Naive thymus-derived CD4-positive, alpha-beta T cell (primary cell): ENCODE measurements at regions of chr7 and their contacts with region 1.

Region 1: GRCh38 chr7:87886875-87887274 is 10.6 kb downstream of the DBF4 start:
- DNase-seq: peak in 6 of 9 donors; percentile 8 to 49 (median 43)
- ATAC-seq: peak; percentile 48
- H3K4me3 ChIP-seq: no peak overlapping the region
- H3K4me3 Mint-ChIP-seq: no peak overlapping the region
- H3K27ac ChIP-seq: no peak overlapping the region
- H3K27ac Mint-ChIP-seq: no peak overlapping the region
- H3K4me1 ChIP-seq: no peaks in the 10 kb centered on the region
- H3K4me1 Mint-ChIP-seq: peaks cover 5 to 28% (median 13%) of the 10 kb centered on the region in 7 donors
- H3K27me3 ChIP-seq: no peaks in the 10 kb centered on the region
- H3K27me3 Mint-ChIP-seq: no peaks in the 10 kb centered on the region

Region 2: GRCh38 chr7:87312215-87312865 is 574.5 kb before region 1 on chr7:
- CTCF ChIA-PET with region 1: interaction called, 3 read pairs
- POLR2A ChIA-PET with region 1: no interaction called
- intact Hi-C with region 1: loop called (anchors 1 to 2 kb)
- DNase-seq: peak; percentile 25 to 70 (median 55)
- ATAC-seq: peak; percentile 98
- H3K4me3 ChIP-seq: no peak overlapping the region
- H3K4me3 Mint-ChIP-seq: no peak overlapping the region
- H3K27ac ChIP-seq: no peak overlapping the region
- H3K27ac Mint-ChIP-seq: no peak overlapping the region
- H3K4me1 ChIP-seq: peaks cover 0 to 4% of the 10 kb centered on the region in 2 donors
- H3K4me1 Mint-ChIP-seq: peaks cover 0 to 3% (median 0%) of the 10 kb centered on the region in 7 donors
- H3K27me3 ChIP-seq: no peaks in the 10 kb centered on the region
- H3K27me3 Mint-ChIP-seq: peaks cover 0 to 12% (median 0%) of the 10 kb centered on the region in 5 donors

Region 3: GRCh38 chr7:87506246-87507180 is 380.4 kb before region 1 on chr7:
- CTCF ChIA-PET with region 1: interaction called, 8 read pairs
- POLR2A ChIA-PET with region 1: no interaction called
- intact Hi-C with region 1: loop called (anchors 1 kb)
- DNase-seq: peak in 3 of 9 donors; percentile 4 to 14 (median 12)
- ATAC-seq: no peak
- H3K4me3 ChIP-seq: no peak overlapping the region
- H3K4me3 Mint-ChIP-seq: no peak overlapping the region
- H3K27ac ChIP-seq: no peak overlapping the region
- H3K27ac Mint-ChIP-seq: no peak overlapping the region
- H3K4me1 ChIP-seq: no peaks in the 10 kb centered on the region
- H3K4me1 Mint-ChIP-seq: peaks cover 0 to 16% (median 0%) of the 10 kb centered on the region in 7 donors
- H3K27me3 ChIP-seq: no peaks in the 10 kb centered on the region
- H3K27me3 Mint-ChIP-seq: no peaks in the 10 kb centered on the region

Region 4: GRCh38 chr7:87853237-87853864 is 33.5 kb before region 1 on chr7:
- CTCF ChIA-PET with region 1: no interaction called
- POLR2A ChIA-PET with region 1: no interaction called
- intact Hi-C with region 1: loop called in 1 of 2 experiments (anchors 5 kb)
- DNase-seq: no peak
- ATAC-seq: no peak
- H3K4me3 ChIP-seq: no peak overlapping the region
- H3K4me3 Mint-ChIP-seq: no peak overlapping the region
- H3K27ac ChIP-seq: no peak overlapping the region
- H3K27ac Mint-ChIP-seq: no peak overlapping the region
- H3K4me1 ChIP-seq: no peaks in the 10 kb centered on the region
- H3K4me1 Mint-ChIP-seq: peaks cover 0 to 13% (median 3%) of the 10 kb centered on the region in 7 donors
- H3K27me3 ChIP-seq: no peaks in the 10 kb centered on the region
- H3K27me3 Mint-ChIP-seq: no peaks in the 10 kb centered on the region

Region 5: GRCh38 chr7:87933945-87934698 is 47.2 kb after region 1 on chr7 and contains the start of gene ADAM22:
- CTCF ChIA-PET with region 1: no interaction called
- POLR2A ChIA-PET with region 1: no interaction called
- intact Hi-C with region 1: no loop called
- DNase-seq: peak; percentile 49 to 80 (median 74)
- ATAC-seq: peak; percentile 96
- H3K4me3 ChIP-seq: peak within 1 kb of the TSS; percentile 80
- H3K4me3 Mint-ChIP-seq: peak within 1 kb of the TSS; percentile 84 to 93 (median 91)
- H3K27ac ChIP-seq: peak within 1 kb of the TSS; percentile 19
- H3K27ac Mint-ChIP-seq: peak within 1 kb of the TSS in 7 of 9 donors; percentile 13 to 82 (median 65)
- H3K4me1 ChIP-seq: peaks cover 4 to 6% of the 10 kb centered on the region in 2 donors
- H3K4me1 Mint-ChIP-seq: peaks cover 0 to 21% (median 12%) of the 10 kb centered on the region in 7 donors
- H3K27me3 ChIP-seq: no peaks in the 10 kb centered on the region
- H3K27me3 Mint-ChIP-seq: peaks cover 0 to 54% (median 4%) of the 10 kb centered on the region in 5 donors
- total RNA-seq, gene ADAM22: 1.1 to 7.1 (median 3.1) TPM

Region 6: GRCh38 chr7:87944531-87944930 is 57.7 kb after region 1 on chr7:
- CTCF ChIA-PET with region 1: no interaction called
- POLR2A ChIA-PET with region 1: no interaction called
- intact Hi-C with region 1: no loop called
- DNase-seq: no peak
- ATAC-seq: no peak
- H3K4me3 ChIP-seq: no peak overlapping the region
- H3K4me3 Mint-ChIP-seq: no peak overlapping the region
- H3K27ac ChIP-seq: no peak overlapping the region
- H3K27ac Mint-ChIP-seq: peak overlapping the region in 1 of 9 donors; percentile 44
- H3K4me1 ChIP-seq: no peaks in the 10 kb centered on the region
- H3K4me1 Mint-ChIP-seq: no peaks in the 10 kb centered on the region
- H3K27me3 ChIP-seq: no peaks in the 10 kb centered on the region
- H3K27me3 Mint-ChIP-seq: no peaks in the 10 kb centered on the region